ENCODE measurements at regions of chr11 and their contacts with region 1.

Region 1: DNA sequence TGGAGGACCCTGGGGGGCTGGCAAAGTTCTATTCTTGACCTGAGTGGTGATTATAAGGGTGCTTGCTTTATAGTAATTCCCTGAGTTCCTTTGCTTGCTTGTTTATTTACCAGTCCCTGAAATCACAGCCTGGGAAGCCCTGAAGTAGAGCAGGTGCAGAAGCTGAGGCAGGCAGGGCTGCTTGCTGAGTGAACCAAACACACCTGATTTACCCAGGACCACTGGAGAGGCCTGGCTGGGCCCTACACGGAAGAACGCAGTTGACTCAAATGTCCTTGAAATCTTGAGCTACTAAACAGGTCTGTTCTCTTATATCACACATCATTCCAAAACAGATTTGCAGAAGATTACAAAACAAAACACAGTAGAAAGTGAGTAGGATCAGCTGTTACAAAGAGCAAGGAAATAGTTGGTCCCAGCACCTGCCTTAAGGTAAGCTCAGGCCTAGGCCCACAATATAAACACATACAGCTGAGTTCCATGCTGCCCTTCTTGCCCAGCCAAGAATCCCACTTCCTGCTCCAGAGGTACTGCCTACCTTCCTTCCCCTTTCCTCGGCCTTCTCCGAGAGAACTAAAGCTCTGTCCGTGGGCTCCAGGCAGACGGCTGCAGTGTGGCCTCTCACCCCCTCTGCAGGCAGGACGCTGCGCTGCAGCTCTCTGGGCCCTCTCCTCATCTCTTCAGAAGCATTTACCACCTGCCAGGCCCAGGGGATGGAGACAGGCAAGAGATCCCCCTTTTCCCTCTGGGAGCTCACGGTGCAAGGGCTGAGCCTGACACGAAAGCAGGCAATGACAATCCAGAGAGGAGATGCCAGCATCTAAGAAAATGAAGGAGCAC is 46.1 kb upstream of the SCUBE2 start:
- DNase-seq: peak; percentile 77
- H3K4me3 Mint-ChIP-seq: no peak overlapping the region
- H3K27ac Mint-ChIP-seq: peak overlapping the region; percentile 68
- H3K4me1 Mint-ChIP-seq: peaks cover 26% of the 10 kb centered on the region
- H3K27me3 Mint-ChIP-seq: no peaks in the 10 kb centered on the region

Region 2: DNA sequence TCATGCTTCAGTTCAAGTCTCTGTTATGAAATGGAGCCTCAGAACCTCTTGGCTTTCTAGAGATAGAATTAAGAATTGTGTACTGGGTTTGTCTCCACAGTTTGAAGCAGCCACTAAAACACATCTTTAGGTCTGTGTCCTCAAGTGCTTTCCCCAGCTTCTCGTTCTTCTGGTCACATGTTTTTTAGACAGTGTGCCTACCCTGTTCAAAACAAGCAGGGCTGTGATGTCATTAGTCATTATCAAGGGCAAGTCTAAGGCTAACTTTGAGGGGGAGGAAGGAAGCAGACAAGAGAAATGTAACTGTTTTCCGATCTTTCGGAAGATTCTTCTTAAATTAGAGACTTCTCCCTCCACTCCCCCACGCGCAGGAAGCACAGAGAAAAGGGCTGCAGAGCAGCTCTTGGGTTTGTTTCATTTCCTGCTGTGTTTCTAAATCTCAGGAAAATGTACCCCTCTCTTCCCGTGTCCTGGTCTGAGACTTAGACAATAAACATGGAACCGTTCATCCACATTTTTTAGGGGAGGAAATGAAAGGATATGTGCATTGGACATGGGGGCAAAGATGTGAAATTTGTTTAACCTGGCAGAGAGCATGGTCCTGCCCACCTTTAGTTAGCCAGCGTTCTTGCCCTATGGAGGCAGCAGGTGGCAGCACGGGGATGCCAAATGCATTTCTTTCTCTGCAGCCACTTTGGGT is 223.4 kb before region 1 on chr11:
- CTCF ChIA-PET with region 1: interaction called, 29 read pairs
- DNase-seq: peak; percentile 66
- H3K4me3 Mint-ChIP-seq: peak overlapping the region; percentile 56
- H3K27ac Mint-ChIP-seq: peak overlapping the region; percentile 90
- H3K4me1 Mint-ChIP-seq: peaks cover 51% of the 10 kb centered on the region
- H3K27me3 Mint-ChIP-seq: peaks cover 13% of the 10 kb centered on the region

Region 3: GRCh38 chr11:8964324-8965320 is 172.9 kb before region 1 on chr11 and contains the start of gene TMEM9B:
- CTCF ChIA-PET with region 1: interaction called, 18 read pairs
- DNase-seq: peak; percentile 88
- H3K4me3 Mint-ChIP-seq: peak within 1 kb of the TSS; percentile 97
- H3K27ac Mint-ChIP-seq: peak within 1 kb of the TSS; percentile 95
- H3K4me1 Mint-ChIP-seq: peaks cover 36% of the 10 kb centered on the region
- H3K27me3 Mint-ChIP-seq: no peaks in the 10 kb centered on the region

Region 4: DNA sequence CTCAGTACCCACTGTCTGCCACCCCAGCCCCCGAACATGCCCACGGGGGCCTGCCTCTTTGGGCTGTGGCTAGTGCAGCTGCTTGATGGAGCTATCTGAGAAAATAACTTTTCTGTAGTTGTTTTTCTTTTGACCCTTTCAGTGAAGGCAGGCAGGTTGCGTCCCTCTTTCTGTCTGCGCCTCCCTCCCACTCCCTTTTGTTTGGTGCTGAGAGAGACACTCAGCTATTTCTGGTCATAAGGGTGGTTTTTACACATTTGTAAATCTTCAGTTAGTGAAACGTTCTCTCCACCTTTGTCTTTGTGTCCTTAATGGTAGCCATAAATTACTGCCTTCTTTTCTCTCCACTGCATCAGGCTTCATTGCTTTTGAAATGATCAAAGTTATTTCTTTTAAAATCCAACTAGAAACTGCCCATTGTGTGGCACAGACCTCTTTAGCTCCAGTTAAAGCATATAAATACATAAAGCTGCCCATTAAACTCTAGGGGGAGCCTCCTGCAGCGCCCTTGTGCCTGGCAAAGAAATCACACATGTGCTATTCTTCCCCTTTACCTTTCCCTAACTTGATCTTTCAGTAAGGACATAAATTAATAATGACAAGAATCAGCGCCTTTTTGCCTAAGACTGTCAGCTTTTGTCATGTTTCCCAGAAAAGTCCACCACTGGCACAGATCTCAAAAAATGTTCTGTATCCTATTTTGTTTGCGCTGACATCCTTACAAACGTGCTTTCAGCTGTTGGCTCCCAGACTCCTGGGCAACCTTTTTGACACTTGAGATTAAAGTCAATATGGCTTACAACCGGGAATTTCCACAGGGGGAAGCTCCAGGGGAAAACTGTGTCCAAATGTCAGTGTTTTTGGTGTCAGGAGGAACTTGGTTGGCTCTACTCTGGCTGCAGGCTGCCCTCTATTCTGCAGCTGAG is 44.4 kb before region 1 on chr11:
- CTCF ChIA-PET with region 1: interaction called, 26 read pairs
- DNase-seq: no peak
- H3K4me3 Mint-ChIP-seq: no peak overlapping the region
- H3K27ac Mint-ChIP-seq: no peak overlapping the region
- H3K4me1 Mint-ChIP-seq: peaks cover 11% of the 10 kb centered on the region
- H3K27me3 Mint-ChIP-seq: peaks cover 80% of the 10 kb centered on the region

Region 5: DNA sequence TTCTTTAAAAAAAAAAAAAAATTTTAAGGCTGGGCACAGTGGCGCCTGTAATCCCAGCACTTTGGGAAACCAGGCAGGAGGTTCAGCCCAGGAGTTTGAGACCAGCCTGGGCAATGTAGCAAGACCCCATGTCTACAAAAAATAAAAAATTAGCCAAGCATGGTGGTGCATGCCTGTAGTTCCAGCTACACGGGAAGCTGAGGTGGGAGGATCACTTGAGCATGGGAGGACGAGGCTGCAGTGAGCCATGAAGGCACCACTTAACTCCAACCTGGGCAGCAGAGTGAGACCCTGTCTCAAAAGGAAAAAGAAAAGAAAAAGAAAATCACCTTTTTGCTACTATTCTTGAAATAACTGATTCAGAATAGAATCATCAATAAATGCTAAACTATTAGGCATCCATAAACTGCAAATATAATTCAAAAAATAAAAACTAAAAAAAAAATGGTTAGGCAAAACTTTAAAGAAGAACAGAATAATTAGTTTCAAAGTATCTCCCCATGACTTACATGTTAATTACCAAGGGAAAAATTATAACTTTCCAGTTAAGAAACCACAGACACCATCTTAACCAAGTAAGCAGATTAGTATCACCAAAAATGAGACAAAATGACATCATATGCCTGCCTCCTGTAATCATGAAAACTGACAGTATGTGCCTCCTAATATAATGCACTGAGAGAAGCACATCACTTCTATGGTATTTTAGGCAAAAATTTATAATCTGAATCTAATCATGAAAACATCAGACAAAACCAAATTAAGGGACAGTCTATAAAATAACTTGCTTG is 64.1 kb after region 1 on chr11:
- CTCF ChIA-PET with region 1: no interaction called
- DNase-seq: no peak
- H3K4me3 Mint-ChIP-seq: no peak overlapping the region
- H3K27ac Mint-ChIP-seq: no peak overlapping the region
- H3K4me1 Mint-ChIP-seq: peaks cover 11% of the 10 kb centered on the region
- H3K27me3 Mint-ChIP-seq: no peaks in the 10 kb centered on the region

Region 6: GRCh38 chr11:9285850-9286587 is 148.5 kb after region 1 on chr11:
- CTCF ChIA-PET with region 1: no interaction called
- DNase-seq: no peak
- H3K4me3 Mint-ChIP-seq: no peak overlapping the region
- H3K27ac Mint-ChIP-seq: no peak overlapping the region
- H3K4me1 Mint-ChIP-seq: peaks cover 10% of the 10 kb centered on the region
- H3K27me3 Mint-ChIP-seq: no peaks in the 10 kb centered on the region

Region 7: GRCh38 chr11:9506489-9507276 is 369.2 kb after region 1 on chr11:
- CTCF ChIA-PET with region 1: interaction called, 15 read pairs
- DNase-seq: peak; percentile 84
- H3K4me3 Mint-ChIP-seq: no peak overlapping the region
- H3K27ac Mint-ChIP-seq: peak overlapping the region; percentile 52
- H3K4me1 Mint-ChIP-seq: peaks cover 11% of the 10 kb centered on the region
- H3K27me3 Mint-ChIP-seq: no peaks in the 10 kb centered on the region